MCF 10A (cell line): ENCODE measurements at regions of chr1 and their contacts with region 1.

Region 1: GRCh38 chr1:234309598-234310459 is 63.4 kb upstream of the COA6 start:
- DNase-seq: peak; percentile 89
- H3K4me3 Mint-ChIP-seq: no peak overlapping the region
- H3K27ac Mint-ChIP-seq: no peak overlapping the region
- H3K4me1 Mint-ChIP-seq: peaks cover 2% of the 10 kb centered on the region
- H3K27me3 Mint-ChIP-seq: no peaks in the 10 kb centered on the region
- CTCF ChIP-seq: peak; percentile 99

Region 2: DNA sequence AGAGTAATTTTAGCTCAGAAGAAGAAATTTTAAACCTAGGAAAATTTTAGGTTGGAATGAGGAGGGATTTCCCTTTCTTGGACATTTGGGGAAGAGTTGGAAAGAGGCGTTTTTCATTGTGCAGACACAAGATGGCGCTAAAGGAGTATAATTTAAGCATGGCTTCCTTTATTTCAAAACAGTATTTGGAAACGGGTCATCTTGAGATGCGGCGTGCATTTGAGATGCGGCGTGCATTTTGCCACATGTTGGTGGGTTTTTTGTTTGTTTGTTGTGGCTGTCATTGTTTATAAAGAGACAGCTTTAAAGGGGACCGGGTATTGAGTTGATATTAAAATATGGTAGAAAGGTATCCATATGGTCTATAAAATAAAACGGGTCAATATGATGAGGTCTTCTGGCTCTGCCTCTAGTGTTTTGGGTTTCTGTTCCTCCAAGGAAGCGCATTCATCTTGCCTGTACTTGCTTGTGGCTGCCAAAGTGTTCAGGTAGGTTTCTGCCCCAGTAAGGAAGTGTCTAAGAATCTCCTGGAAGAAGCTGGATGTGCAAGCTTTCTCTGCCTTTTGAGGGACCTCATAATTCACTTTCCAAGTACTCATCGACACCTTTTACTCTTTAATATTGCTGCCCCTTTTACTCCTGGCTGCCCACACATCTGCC is 195.1 kb before region 1 on chr1:
- CTCF ChIA-PET with region 1: interaction called, 506 read pairs
- POLR2A ChIA-PET with region 1: interaction called, 3 read pairs
- intact Hi-C with region 1: loop called (anchors 1 kb)
- DNase-seq: peak; percentile 84
- H3K4me3 Mint-ChIP-seq: peak overlapping the region; percentile 57
- H3K27ac Mint-ChIP-seq: no peak overlapping the region
- H3K4me1 Mint-ChIP-seq: peaks cover 13% of the 10 kb centered on the region
- H3K27me3 Mint-ChIP-seq: no peaks in the 10 kb centered on the region
- CTCF ChIP-seq: peak; percentile 97

Region 3: DNA sequence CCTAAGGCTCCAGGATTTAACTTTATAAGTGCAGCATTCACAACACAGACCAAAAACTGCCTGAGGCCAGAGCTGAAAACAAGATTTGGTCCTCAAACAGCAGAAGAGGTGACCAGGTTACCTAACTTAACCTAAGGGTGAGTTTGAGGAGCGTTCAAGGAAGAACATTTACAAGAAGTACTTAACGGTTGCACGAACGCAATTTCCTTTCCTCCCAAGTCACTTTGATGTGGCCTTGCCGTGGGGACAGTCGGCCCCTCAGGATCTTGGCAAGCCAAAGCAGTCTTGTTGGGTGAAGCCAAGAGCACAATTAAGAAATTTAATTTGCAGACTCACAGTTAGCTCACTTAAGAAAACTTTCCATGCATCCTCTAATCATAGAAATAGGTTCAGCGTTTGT is 139.2 kb before region 1 on chr1:
- CTCF ChIA-PET with region 1: interaction called, 81 read pairs
- POLR2A ChIA-PET with region 1: no interaction called
- intact Hi-C with region 1: no loop called
- DNase-seq: no peak
- H3K4me3 Mint-ChIP-seq: no peak overlapping the region
- H3K27ac Mint-ChIP-seq: no peak overlapping the region
- H3K4me1 Mint-ChIP-seq: no peaks in the 10 kb centered on the region
- H3K27me3 Mint-ChIP-seq: no peaks in the 10 kb centered on the region
- CTCF ChIP-seq: no peak

Region 4: DNA sequence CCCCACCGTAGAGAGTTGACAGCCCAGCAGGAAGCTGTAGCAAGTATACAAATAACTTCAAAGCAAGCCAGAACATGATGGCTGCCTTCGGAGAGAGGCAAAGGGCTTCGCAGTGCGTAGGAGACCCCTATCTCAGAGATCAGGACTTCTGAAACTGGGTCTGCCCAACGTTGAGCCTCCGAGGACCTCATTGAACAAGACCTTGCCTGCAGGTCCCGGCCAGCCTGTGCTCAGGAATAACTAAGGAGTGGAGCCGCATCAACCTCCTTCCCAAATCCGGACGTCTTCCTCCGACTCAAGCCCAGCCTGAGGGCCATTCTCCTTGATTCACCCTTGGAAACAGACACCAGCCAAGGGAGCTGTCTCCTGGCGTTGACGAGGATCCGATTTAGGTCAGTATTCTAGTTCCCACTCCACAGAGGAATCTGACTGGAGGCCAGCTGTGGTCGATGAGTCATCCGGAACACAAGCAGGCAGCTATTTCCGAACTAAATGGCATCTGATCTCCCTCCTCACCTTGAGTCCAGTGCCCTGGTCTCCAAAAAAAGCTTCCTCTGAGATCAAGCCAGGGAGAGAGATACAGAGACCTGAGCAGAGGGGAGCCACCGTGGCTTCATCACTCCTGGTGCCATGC is 103.1 kb before region 1 on chr1:
- CTCF ChIA-PET with region 1: interaction called, 37 read pairs
- POLR2A ChIA-PET with region 1: no interaction called
- intact Hi-C with region 1: no loop called
- DNase-seq: peak; percentile 99
- H3K4me3 Mint-ChIP-seq: peak overlapping the region; percentile 34
- H3K27ac Mint-ChIP-seq: no peak overlapping the region
- H3K4me1 Mint-ChIP-seq: peaks cover 20% of the 10 kb centered on the region
- H3K27me3 Mint-ChIP-seq: no peaks in the 10 kb centered on the region
- CTCF ChIP-seq: no peak

Region 5: GRCh38 chr1:234260578-234260977 is 49.3 kb before region 1 on chr1:
- CTCF ChIA-PET with region 1: interaction called, 23 read pairs
- POLR2A ChIA-PET with region 1: interaction called, 3 read pairs
- intact Hi-C with region 1: no loop called
- DNase-seq: peak; percentile 90
- H3K4me3 Mint-ChIP-seq: no peak overlapping the region
- H3K27ac Mint-ChIP-seq: peak overlapping the region; percentile 21
- H3K4me1 Mint-ChIP-seq: peaks cover 30% of the 10 kb centered on the region
- H3K27me3 Mint-ChIP-seq: no peaks in the 10 kb centered on the region
- CTCF ChIP-seq: no peak

Region 6: DNA sequence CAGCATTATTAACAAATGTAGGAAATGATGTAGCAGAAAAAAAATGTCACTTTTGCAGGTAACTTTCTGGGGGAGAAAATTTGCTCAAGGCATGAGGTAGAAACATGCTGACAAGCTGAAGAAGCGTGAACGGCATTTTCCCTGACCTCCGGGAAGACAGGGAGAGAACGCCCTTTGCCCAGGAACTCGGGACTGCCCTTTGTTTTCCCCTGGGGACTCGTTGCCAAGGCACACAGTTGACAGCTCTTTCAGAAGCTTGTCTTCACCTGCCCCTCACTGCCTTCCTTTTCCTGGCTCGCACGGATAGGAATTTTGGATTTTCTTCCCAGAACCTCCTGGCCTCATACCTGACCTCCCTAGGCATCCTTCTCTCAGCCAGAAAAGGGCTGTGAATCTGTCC is 10.7 kb after region 1 on chr1:
- CTCF ChIA-PET with region 1: interaction called, 233 read pairs
- POLR2A ChIA-PET with region 1: interaction called, 6 read pairs
- intact Hi-C with region 1: no loop called
- DNase-seq: no peak
- H3K4me3 Mint-ChIP-seq: no peak overlapping the region
- H3K27ac Mint-ChIP-seq: no peak overlapping the region
- H3K4me1 Mint-ChIP-seq: peaks cover 4% of the 10 kb centered on the region
- H3K27me3 Mint-ChIP-seq: peaks cover 12% of the 10 kb centered on the region
- CTCF ChIP-seq: no peak

Region 7: DNA sequence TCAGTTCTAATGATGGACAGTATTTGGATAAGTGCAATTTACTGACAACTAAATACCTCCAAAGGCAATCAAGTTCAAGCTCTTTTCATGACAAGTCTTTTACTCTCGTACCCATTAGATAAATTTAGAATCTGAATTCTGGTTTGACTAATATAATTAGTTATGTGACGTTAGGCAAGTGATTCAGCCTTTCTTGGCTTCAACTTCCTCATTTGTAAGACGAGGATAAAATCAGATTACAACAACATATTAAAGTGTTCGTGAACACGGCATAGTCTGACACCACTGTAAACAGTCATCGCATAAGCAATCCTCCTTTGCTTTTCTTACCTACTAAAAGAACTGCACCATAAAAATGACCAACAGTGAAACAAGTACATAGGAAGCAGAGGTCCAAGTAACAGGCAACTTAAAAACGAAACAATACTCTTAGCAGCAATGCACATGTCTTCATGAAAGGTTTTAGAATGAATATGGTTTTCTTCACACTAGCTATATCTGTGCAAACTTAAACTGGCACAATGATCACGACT is 89.1 kb after region 1 on chr1:
- CTCF ChIA-PET with region 1: no interaction called
- POLR2A ChIA-PET with region 1: no interaction called
- intact Hi-C with region 1: no loop called
- DNase-seq: peak; percentile 59
- H3K4me3 Mint-ChIP-seq: no peak overlapping the region
- H3K27ac Mint-ChIP-seq: peak overlapping the region; percentile 59
- H3K4me1 Mint-ChIP-seq: peaks cover 28% of the 10 kb centered on the region
- H3K27me3 Mint-ChIP-seq: no peaks in the 10 kb centered on the region
- CTCF ChIP-seq: no peak